Endothelial cell of umbilical vein (primary cell): ENCODE measurements at regions of chr1 and their contacts with region 1.

Region 1: GRCh38 chr1:52033190-52034049 is at the start of gene KTI12:
- DNase-seq: peak; percentile 91
- H3K4me3 ChIP-seq: peak within 1 kb of the TSS; percentile 58 to 87 (median 79)
- H3K27ac ChIP-seq: peak within 1 kb of the TSS; percentile 70
- H3K4me1 ChIP-seq: peaks cover 21% of the 10 kb centered on the region
- H3K27me3 ChIP-seq: no peaks in the 10 kb centered on the region
- CTCF ChIP-seq: no peak
- POLR2A ChIP-seq: peak; percentile 79
- total RNA-seq, gene KTI12: 9.2 and 10.0 TPM in 2 replicates

Region 2: DNA sequence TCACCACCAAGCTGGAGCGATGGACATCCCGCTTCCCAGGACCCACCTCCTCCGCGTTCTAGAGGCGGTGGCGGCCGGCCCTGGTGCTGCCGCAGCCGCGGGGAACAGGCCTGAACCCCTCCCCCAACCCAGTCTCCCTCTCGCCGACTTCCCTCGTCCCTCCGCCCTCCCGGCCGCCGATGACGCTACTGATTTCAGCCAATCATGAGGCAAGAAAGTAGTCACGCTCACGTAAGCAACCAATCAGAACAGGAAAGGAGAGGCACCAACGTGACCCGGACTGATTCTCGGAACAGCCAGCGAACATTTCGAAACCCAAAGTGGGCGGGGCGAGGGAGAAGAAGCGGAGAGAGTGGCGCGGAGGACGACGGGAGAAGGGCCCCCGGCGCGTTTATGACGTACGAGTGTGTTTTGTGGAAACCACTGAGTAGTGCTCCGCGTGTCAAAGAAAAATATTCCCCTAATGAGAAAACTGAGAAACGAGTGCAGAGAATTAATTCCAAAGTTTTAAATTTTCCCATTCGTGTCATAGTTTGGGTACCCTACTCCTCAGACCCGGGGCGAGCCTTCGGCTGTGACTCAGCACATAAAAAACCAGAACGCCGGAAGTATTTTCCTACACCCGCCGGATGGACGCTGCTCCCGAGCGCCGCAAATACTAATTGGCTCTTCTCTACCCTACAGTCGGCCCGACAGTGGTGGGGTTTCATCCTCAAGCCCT is 154.6 kb before region 1 on chr1 and contains the start of gene NRDC:
- CTCF ChIA-PET with region 1: no interaction called
- POLR2A ChIA-PET with region 1: no interaction called
- dilution Hi-C with region 1: no loop called
- intact Hi-C with region 1: loop called (anchors 1 kb)
- DNase-seq: peak; percentile 100
- H3K4me3 ChIP-seq: peak within 1 kb of the TSS; percentile 89 to 94 (median 94)
- H3K27ac ChIP-seq: peak within 1 kb of the TSS; percentile 97
- H3K4me1 ChIP-seq: peaks cover 24% of the 10 kb centered on the region
- H3K27me3 ChIP-seq: no peaks in the 10 kb centered on the region
- CTCF ChIP-seq: no peak
- POLR2A ChIP-seq: peak; percentile 74
- total RNA-seq, gene NRDC: 125 and 146 TPM in 2 replicates

Region 3: GRCh38 chr1:52056163-52056936 is 22.9 kb after region 1 on chr1 and contains the start of gene BTF3L4:
- CTCF ChIA-PET with region 1: no interaction called
- POLR2A ChIA-PET with region 1: interaction called, 4 read pairs
- dilution Hi-C with region 1: no loop called
- intact Hi-C with region 1: loop called (anchors 1 kb)
- DNase-seq: peak; percentile 89
- H3K4me3 ChIP-seq: peak within 1 kb of the TSS; percentile 62 to 93 (median 92)
- H3K27ac ChIP-seq: peak within 1 kb of the TSS; percentile 75
- H3K4me1 ChIP-seq: peaks cover 24% of the 10 kb centered on the region
- H3K27me3 ChIP-seq: no peaks in the 10 kb centered on the region
- CTCF ChIP-seq: no peak
- POLR2A ChIP-seq: peak; percentile 52
- total RNA-seq, gene BTF3L4: 43.2 and 45.6 TPM in 2 replicates

Region 4: GRCh38 chr1:52179085-52179484 is 145.7 kb after region 1 on chr1:
- CTCF ChIA-PET with region 1: no interaction called
- POLR2A ChIA-PET with region 1: no interaction called
- dilution Hi-C with region 1: no loop called
- intact Hi-C with region 1: no loop called
- DNase-seq: no peak
- H3K4me3 ChIP-seq: no peak overlapping the region
- H3K27ac ChIP-seq: no peak overlapping the region
- H3K4me1 ChIP-seq: no peaks in the 10 kb centered on the region
- H3K27me3 ChIP-seq: no peaks in the 10 kb centered on the region
- CTCF ChIP-seq: no peak
- POLR2A ChIP-seq: no peak